ENCODE measurements at regions of chr1 and their contacts with region 1.

Region 1: DNA sequence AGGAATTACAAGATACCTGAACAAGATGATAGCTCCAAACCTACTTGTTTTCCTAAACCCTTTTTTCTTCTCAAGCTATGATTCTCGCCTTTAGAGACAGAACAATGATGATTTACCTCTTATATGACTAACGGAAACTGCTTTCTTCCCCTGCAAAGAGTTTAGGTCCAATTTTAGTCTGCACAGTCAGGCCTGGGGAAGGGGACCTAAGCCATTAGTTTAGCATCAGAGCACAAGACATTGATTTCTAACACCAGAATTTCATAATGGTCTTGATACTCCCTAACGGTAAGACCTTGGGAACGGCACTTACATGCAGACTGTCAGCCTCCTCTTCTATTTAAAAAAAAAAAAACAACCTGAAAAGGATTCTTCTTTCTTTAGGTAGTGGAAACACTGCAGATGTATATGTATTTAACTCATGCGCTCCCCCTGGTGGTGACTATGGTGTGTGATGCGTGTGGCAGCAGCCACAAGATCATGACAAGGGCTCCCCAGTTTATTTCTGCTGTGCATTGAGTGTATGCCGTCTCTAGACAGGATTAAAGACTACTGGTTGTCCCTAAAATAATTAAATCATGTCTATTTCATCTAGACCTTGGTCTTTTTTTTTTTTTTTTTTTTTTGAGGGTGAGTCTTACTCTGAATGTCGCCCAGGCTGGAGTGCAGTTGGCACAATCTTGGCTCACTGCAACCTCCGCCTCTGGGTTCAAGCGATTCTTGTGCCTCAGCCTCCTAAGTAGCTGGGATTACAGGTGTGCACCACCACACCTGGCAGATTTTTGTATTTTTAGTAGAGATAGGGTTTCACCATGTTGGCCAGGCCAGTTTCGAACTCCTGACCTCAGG is 37.3 kb upstream of the TMEM222 start:
- DNase-seq: peak; percentile 72 to 95 (median 86)
- ATAC-seq: peak; percentile 85 to 91 (median 88)
- H3K4me3 ChIP-seq: no peak overlapping the region
- H3K4me3 Mint-ChIP-seq: no peak overlapping the region
- H3K27ac ChIP-seq: no peak overlapping the region
- H3K27ac Mint-ChIP-seq: peak overlapping the region in 1 of 2 donors; percentile 28
- H3K4me1 ChIP-seq: peaks cover 0 to 2% of the 10 kb centered on the region in 2 experiments
- H3K4me1 Mint-ChIP-seq: peaks cover 0 to 6% (median 5%) of the 10 kb centered on the region in 3 donors
- H3K27me3 ChIP-seq: no peaks in the 10 kb centered on the region
- H3K27me3 Mint-ChIP-seq: no peaks in the 10 kb centered on the region

Region 2: GRCh38 chr1:27102707-27103491 is 181.8 kb before region 1 on chr1:
- CTCF ChIA-PET with region 1: interaction called, 9 to 17 read pairs
- POLR2A ChIA-PET with region 1: interaction called in 1 of 2 experiments, 3 read pairs
- DNase-seq: peak; percentile 44 to 86 (median 74)
- ATAC-seq: peak; percentile 78 to 87 (median 84)
- H3K4me3 ChIP-seq: no peak overlapping the region
- H3K4me3 Mint-ChIP-seq: no peak overlapping the region
- H3K27ac ChIP-seq: no peak overlapping the region
- H3K27ac Mint-ChIP-seq: no peak overlapping the region
- H3K4me1 ChIP-seq: peaks cover 0 to 11% of the 10 kb centered on the region in 2 experiments
- H3K4me1 Mint-ChIP-seq: peaks cover 1 to 17% (median 14%) of the 10 kb centered on the region in 3 donors
- H3K27me3 ChIP-seq: no peaks in the 10 kb centered on the region
- H3K27me3 Mint-ChIP-seq: no peaks in the 10 kb centered on the region

Region 3: DNA sequence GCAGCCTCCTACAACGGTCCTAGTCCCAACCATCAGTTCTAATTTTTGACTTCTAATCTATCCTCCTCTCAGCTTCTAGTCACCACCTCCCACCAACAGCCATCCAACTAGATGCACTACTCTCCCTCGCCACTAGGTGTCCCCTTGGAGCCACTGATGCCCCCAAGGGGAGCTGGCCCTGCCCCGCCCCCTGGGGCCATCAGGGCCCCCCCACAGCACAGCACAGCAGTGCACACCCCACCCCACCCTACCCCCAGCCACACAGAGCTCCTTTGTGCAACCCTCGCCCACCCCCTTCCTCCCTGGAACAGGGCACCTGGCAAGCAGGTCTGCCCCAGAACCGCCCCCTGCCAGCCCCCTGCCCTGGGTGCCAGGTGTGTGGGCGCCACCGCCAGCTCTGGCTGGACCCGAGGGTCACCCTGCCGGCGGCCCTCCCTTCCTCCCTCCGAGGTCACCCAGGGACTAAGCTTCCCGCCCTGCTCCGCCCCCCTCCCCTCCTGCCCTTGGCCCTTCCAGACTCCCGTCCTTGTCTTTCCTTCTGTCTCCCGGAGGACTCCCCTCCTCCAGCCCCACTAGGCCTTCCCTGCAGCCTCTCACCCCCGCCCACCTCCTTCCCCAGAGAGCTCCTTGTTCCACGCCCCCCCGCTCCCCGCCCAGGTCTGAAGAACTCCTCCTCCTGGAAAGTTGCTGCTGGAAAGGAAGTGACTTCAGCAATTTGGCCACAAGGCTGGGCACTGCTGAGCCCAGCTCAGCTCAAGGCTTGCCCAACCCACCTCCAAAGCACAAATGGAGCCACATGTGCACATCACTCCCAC is 272.3 kb after region 1 on chr1:
- CTCF ChIA-PET with region 1: interaction called in 1 of 2 experiments, 10 read pairs
- POLR2A ChIA-PET with region 1: no interaction called
- DNase-seq: peak; percentile 28 to 85 (median 61)
- ATAC-seq: peak; percentile 73 to 83 (median 78)
- H3K4me3 ChIP-seq: no peak overlapping the region
- H3K4me3 Mint-ChIP-seq: peak overlapping the region in 1 of 3 donors; percentile 76
- H3K27ac ChIP-seq: no peak overlapping the region
- H3K27ac Mint-ChIP-seq: peak overlapping the region; percentile 71 to 80
- H3K4me1 ChIP-seq: peaks cover 14 to 32% of the 10 kb centered on the region in 2 experiments
- H3K4me1 Mint-ChIP-seq: peaks cover 34 to 52% (median 42%) of the 10 kb centered on the region in 3 donors
- H3K27me3 ChIP-seq: no peaks in the 10 kb centered on the region
- H3K27me3 Mint-ChIP-seq: no peaks in the 10 kb centered on the region

Measured in T-cell (primary cell).